ENCODE measurements at regions of chr19 and their contacts with region 1.

Region 1: DNA sequence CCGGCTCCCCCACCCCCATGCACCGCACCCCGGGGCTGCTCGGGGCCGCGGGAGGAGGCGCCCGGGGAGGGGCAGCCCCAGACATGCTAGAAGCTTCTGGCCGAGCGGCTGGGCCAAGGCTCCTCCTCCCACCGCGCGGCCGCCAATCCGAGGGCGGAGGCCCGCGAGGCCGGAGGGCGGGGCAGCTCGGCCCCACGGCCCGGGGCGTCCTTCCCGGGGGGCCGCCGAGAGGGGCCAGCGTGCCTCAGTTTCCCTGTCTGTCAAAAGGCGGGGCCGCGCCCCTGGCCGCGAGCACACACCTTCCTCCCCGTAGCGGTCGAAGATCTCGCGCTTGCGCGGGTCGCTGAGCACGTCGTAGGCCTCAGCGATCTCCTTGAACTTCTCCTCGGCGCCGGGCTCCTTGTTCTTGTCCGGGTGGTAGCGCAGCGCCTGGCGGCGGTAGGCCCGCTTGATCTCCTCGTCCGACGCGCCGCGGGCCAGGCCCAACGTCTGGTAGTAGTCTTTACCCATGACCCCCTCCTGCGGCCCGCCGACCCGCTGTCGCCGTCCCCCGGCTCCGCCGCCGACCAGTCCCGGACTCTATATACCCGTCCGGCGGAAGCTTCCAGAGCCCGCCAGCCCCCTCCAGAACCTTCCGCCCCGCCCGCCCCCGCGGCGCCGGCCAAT is at the start of gene DNAJB1:
- DNase-seq: peak; percentile 74
- ATAC-seq: peak; percentile 73
- H3K4me3 Mint-ChIP-seq: peak within 1 kb of the TSS; percentile 94
- H3K27ac Mint-ChIP-seq: peak within 1 kb of the TSS; percentile 96
- H3K4me1 Mint-ChIP-seq: peaks cover 65% of the 10 kb centered on the region
- H3K27me3 Mint-ChIP-seq: no peaks in the 10 kb centered on the region
- total RNA-seq, gene DNAJB1: 110 to 112 TPM

Region 2: GRCh38 chr19:14496028-14496833 is 21.7 kb before region 1 on chr19 and contains the start of gene GIPC1:
- CTCF ChIA-PET with region 1: interaction called, 3 read pairs
- POLR2A ChIA-PET with region 1: interaction called, 11 read pairs
- DNase-seq: peak; percentile 81
- ATAC-seq: peak; percentile 91
- H3K4me3 Mint-ChIP-seq: peak within 1 kb of the TSS; percentile 80
- H3K27ac Mint-ChIP-seq: peak within 1 kb of the TSS; percentile 78
- H3K4me1 Mint-ChIP-seq: peaks cover 35% of the 10 kb centered on the region
- H3K27me3 Mint-ChIP-seq: peaks cover 2% of the 10 kb centered on the region
- total RNA-seq, gene GIPC1: 37.9 to 39.3 TPM

Region 3: GRCh38 chr19:14529254-14530004 is 11.5 kb after region 1 on chr19 and contains the start of gene TECR:
- CTCF ChIA-PET with region 1: interaction called, 3 read pairs
- POLR2A ChIA-PET with region 1: interaction called, 37 read pairs
- DNase-seq: peak; percentile 100
- ATAC-seq: peak; percentile 98
- H3K4me3 Mint-ChIP-seq: peak within 1 kb of the TSS; percentile 97
- H3K27ac Mint-ChIP-seq: peak within 1 kb of the TSS; percentile 96
- H3K4me1 Mint-ChIP-seq: peaks cover 27% of the 10 kb centered on the region
- H3K27me3 Mint-ChIP-seq: no peaks in the 10 kb centered on the region
- total RNA-seq, gene TECR: 153 to 163 TPM

Region 4: DNA sequence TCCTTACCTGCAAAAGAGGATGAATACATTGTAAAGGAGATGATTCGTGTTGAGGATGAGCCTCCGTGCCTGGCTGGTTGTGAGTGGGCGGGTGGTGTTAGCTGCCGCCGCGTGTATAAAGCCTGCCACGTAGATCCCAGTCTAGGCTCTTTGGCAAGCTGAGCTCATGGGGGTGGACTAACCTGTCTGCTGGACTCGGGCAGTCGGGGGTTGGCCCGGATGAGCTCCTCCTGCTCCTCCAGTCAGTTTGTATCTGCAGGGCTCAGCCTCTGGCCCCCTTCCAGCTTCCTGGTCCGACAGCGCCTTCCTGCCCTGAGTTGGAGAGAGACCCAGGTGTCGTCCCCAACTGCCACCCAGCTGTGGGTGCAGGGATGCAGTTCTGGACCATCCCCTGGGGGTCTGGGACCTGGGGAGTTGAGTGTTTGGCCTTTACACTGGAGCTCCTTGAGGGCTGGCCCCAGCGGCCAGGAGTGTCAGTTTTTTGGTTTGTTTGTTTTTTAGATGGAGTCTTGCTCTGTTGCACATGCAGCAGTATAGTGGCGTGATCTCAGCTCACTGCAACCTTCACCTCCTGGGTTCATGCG is 32.3 kb after region 1 on chr19:
- CTCF ChIA-PET with region 1: interaction called, 10 read pairs
- POLR2A ChIA-PET with region 1: interaction called, 10 read pairs
- DNase-seq: no peak
- ATAC-seq: no peak
- H3K4me3 Mint-ChIP-seq: no peak overlapping the region
- H3K27ac Mint-ChIP-seq: peak overlapping the region; percentile 64
- H3K4me1 Mint-ChIP-seq: peaks cover 34% of the 10 kb centered on the region
- H3K27me3 Mint-ChIP-seq: no peaks in the 10 kb centered on the region